ENCODE measurements at regions of chr19 and their contacts with region 1.

Region 1: DNA sequence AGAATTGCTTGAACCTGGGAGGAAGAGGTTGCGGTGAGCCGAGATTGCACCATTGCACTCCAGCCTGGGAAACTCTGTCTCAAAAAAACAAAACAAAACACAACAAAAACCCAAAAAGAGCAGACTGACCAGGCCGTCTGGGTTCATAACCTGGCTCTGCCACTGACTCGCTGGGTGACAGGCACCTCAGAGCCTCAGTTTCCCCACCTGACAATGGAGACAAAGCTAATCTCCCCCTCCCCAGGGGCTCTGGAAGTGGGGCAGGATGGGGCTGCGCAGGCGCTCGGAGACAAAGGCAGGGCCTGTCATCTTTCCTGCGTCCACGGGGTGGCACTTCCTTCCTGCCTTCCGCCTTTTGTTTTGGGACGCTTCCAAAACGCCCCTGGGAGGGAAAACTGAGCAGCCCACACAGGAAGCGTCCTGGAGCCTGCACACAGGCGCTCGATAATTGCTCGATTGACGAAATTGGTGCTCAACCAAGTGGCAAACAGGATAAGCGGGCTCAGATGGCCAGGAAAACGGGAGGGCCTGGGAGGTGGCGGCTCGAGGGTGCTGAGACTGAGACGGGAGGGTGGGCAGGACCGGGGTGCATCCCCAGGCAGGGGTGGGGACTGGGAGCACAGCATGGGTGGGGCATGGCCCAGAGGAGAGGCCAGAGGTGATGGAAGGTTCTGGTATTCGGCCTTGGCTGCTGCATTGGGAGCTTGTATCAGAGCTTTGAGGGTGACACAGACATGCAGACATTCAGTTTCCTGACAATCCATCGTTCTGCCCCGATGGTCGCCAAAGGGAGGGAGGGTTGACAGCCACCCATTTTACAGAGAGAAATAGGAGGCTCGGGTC is 17.8 kb downstream of the SPC24 start:
- H3K4me3 ChIP-seq: peak overlapping the region; percentile 8
- H3K27ac ChIP-seq: no peak overlapping the region; the same call in 1 of the 2 replicates
- H3K4me1 ChIP-seq: peaks cover 19% of the 10 kb centered on the region
- CTCF ChIP-seq: peak; percentile 80

Region 2: DNA sequence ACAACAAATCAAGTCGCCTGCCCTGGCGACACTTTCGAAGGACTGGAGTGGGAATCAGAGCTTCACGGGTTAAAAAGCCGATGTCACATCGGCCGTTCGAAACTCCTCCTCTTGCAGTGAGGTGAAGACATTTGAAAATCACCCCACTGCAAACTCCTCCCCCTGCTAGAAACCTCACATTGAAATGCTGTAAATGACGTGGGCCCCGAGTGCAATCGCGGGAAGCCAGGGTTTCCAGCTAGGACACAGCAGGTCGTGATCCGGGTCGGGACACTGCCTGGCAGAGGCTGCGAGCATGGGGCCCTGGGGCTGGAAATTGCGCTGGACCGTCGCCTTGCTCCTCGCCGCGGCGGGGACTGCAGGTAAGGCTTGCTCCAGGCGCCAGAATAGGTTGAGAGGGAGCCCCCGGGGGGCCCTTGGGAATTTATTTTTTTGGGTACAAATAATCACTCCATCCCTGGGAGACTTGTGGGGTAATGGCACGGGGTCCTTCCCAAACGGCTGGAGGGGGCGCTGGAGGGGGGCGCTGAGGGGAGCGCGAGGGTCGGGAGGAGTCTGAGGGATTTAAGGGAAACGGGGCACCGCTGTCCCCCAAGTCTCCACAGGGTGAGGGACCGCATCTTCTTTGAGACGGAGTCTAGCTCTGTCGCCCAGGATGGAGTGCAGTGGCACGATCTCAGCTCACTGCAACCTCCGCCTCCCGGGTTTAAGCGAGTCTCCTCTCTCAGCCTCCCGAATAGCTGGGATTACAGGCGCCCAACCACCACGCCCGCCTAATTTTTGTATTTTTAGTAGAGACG is 48.3 kb before region 1 on chr19 and contains the start of gene LDLR:
- CTCF ChIA-PET with region 1: no interaction called
- POLR2A ChIA-PET with region 1: no interaction called
- H3K4me3 ChIP-seq: peak within 1 kb of the TSS; percentile 48
- H3K27ac ChIP-seq: peak within 1 kb of the TSS; percentile 90
- H3K4me1 ChIP-seq: peaks cover 10% of the 10 kb centered on the region; the same call in 1 of the 2 replicates
- CTCF ChIP-seq: peak; percentile 56

Region 3: DNA sequence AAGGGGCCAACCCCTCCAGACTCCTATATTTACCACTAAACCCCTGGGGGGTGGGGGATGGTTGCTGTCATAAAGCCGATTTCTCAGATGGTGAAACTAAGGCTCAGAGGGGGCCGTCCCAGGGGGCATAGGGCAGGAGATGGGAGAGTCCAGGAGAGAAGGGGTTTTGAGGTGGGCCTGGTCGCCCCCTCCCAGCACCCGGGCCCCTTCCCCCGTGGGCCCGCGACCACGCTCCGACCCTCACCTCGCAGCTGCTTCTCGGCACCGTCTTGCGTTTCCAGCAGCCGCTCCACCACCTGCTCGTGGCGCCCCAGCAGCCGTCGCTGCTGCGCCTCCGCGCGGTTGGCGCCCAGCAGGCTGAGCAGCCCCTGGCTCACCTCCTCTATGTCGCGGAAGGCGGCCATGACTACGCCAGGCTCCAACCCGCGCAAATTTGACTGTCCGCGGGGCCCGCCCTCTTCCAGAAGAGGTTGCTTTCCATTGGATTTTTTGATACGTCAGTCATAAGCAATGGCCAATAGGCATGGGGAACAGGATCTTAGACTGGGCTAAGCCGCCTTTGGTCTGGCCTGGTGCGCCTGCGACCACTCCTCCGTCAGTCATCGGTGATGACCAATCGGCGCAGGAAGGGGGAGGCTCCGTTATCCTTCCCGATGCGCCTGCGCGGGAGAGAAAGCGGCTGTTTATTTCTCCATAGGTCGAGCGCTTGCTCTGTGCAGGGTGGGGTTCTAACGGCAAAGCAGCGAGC is 17.8 kb after region 1 on chr19 and contains the start of gene SPC24:
- CTCF ChIA-PET with region 1: interaction called, 5 read pairs
- POLR2A ChIA-PET with region 1: interaction called, 37 read pairs
- H3K4me3 ChIP-seq: peak within 1 kb of the TSS; percentile 66
- H3K27ac ChIP-seq: peak within 1 kb of the TSS; percentile 80
- H3K4me1 ChIP-seq: no peaks in the 10 kb centered on the region; the same call in 1 of the 2 replicates
- CTCF ChIP-seq: peak; percentile 91

Region 4: GRCh38 chr19:11197264-11198174 is 59.8 kb after region 1 on chr19 and contains the start of gene KANK2:
- CTCF ChIA-PET with region 1: interaction called, 8 read pairs
- POLR2A ChIA-PET with region 1: interaction called, 17 read pairs
- H3K4me3 ChIP-seq: peak within 1 kb of the TSS; percentile 75
- H3K27ac ChIP-seq: peak within 1 kb of the TSS; percentile 54; the same call in 1 of the 2 replicates
- H3K4me1 ChIP-seq: no peaks in the 10 kb centered on the region
- CTCF ChIP-seq: peak; percentile 35; the same call in 1 of the 2 replicates

Region 5: DNA sequence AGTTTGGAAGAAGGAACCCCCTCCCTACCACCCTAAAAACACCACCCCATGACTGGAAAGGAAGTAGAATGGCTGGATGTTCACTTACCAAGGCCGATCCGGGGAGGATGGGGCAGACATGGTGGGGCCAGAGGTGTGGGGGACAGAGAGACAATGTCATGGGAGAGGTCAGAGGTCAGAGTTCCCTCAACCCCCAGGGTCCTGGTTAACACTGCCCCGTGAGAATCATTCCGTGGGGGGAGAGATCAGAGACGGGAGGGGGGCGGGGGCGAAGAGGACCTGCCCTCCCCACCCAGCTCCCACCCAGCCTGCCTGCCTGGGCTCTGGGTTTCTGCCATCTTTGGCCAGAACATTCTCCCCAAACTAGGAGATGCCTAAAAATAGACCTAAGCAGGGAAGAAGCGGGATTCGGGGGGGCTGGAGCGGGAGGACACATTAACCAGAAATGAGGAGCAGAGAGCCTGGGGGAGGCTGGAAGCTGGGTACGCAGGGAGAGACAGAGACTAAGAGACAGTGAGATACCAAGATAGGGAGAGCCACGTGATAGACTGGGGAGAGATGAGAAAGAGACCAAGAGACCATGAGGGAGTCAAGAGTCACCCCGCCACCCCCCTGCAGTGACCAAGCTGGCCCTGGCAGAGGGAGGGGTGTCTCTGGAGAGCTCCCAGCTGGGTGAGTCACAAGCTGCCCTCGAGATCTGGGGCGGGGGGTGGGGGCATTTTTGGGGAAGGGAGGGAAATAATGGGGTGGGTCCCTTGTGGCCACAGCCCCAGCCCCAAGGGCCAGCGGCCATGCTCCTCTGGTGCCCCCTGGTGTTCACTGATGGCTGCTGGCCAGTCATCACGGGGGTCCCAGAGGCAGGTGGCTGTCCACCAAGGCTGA is 65.7 kb after region 1 on chr19:
- CTCF ChIA-PET with region 1: interaction called, 44 read pairs
- POLR2A ChIA-PET with region 1: interaction called, 17 read pairs
- H3K4me3 ChIP-seq: no peak overlapping the region
- H3K27ac ChIP-seq: no peak overlapping the region
- H3K4me1 ChIP-seq: 0 out of 2 replicates have a peak, but pooled peaks cover 2% of the 10 kb centered on the region
- CTCF ChIP-seq: peak; percentile 70